PC-9 (cell line): ENCODE measurements at regions of chr10 and their contacts with region 1.

Region 1: DNA sequence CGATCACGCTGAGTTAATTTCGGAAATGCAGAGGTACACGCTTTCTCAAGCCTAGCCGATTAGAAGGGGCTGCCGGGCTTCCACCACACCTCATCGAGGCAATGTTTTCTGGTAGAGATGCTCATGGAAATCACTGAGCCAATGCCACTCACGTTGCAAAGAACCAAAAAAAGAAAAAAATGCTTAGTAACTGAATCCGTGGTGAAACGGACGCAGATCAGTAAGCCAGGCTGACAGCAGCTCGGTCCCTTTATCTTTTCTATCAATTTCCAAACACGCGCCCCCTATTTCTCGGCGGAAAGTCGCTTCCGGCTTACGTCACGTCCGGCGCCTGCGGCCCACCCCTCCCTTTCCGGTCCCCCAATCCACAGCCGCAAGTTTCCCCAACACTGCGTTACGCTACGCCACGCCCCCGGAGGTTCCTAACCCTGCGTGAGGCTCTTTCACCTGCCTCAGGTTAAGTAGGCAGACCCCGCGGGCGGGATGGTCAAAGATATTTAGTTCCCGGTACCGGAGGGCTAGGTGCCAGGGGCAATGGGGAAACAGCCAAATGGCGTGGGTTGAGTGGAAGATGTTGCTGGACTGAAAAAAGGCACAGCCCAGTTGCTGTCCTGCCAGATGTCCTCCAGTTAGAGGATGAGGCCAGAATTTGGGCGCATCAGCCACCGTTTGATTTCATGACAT is at the start of gene NSUN6:
- DNase-seq: peak; percentile 71 to 84
- H3K4me3 ChIP-seq: peak within 1 kb of the TSS; percentile 96
- H3K27ac ChIP-seq: peak within 1 kb of the TSS; percentile 66
- H3K4me1 ChIP-seq: peaks cover 9% of the 10 kb centered on the region
- H3K27me3 ChIP-seq: no peaks in the 10 kb centered on the region
- CTCF ChIP-seq: no peak
- total RNA-seq, gene NSUN6: 11.9 and 12.9 TPM in 2 replicates

Region 2: DNA sequence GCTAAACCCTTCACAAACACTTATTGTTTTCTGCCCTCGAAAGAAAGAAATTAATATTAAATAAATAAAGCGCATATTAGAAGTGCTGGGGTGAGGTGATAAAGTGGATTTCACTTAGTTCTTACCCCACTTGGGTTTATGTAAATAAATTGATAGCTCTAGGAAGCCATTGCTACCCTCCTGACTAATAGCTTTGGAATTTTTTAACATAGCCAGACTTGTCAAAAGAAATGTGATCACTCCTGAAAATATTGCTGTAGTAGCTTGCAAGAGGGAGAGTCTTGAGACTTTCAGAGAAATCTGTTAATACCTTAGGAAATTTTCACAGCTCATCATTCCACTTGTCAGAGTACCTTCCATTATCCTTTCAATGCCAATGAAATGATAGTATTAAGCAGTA is 15.3 kb after region 1 on chr10:
- CTCF ChIA-PET with region 1: no interaction called
- POLR2A ChIA-PET with region 1: interaction called, 11 read pairs
- intact Hi-C with region 1: no loop called
- DNase-seq: peak in 1 of 2 experiments; percentile 45
- H3K4me3 ChIP-seq: no peak overlapping the region
- H3K27ac ChIP-seq: no peak overlapping the region
- H3K4me1 ChIP-seq: peaks cover 18% of the 10 kb centered on the region
- H3K27me3 ChIP-seq: no peaks in the 10 kb centered on the region
- CTCF ChIP-seq: no peak

Region 3: GRCh38 chr10:18868919-18869318 is 217.5 kb after region 1 on chr10:
- CTCF ChIA-PET with region 1: no interaction called
- POLR2A ChIA-PET with region 1: no interaction called
- intact Hi-C with region 1: no loop called
- DNase-seq: no peak
- H3K4me3 ChIP-seq: no peak overlapping the region
- H3K27ac ChIP-seq: no peak overlapping the region
- H3K4me1 ChIP-seq: no peaks in the 10 kb centered on the region
- H3K27me3 ChIP-seq: no peaks in the 10 kb centered on the region
- CTCF ChIP-seq: no peak